Caki2 (cell line): ENCODE measurements at regions of chr12 and their contacts with region 1.

Region 1: DNA sequence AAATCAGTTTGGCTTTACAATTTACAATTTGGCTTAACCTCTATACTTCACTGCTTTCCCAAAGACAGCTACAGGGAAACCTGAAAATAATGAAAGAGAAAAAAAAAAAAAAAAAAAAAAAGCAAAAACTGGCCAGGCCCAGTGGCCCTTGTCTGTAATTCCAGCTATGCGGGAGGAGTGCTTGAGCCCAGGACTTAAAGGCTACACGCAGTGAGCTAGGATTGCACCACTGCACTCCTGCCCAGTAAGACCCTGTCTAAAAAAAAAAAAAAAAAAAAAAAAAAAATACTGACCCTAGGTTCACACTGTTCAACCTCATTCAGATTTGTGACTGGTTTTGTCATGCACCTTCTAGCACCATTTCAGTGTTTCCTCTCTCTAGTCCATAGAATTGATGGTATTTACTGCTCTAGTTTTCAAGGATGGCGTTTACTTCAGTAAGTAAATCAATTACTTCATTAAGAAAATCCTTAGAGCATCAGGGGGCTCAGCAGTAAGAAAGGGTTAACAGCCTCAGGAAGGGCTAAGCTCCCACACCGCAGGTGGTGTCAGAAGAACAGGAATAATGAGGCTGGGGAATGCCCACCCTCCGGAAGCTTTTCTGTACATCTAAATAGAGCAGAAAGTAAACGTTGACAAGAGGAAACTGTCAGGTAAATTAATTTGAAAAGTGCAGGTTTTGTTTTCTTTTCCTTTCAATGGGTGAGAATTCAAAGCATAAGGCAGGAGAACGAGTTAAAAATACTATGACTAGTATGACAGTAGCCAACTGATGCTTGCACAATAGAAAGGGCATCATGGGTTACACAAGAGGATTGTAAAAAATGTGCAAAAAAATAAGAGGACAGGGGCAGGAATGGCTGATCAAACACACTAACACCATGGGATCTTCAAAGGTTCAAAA is 115.0 kb upstream of the MDM1 start:
- DNase-seq: no peak

Region 2: DNA sequence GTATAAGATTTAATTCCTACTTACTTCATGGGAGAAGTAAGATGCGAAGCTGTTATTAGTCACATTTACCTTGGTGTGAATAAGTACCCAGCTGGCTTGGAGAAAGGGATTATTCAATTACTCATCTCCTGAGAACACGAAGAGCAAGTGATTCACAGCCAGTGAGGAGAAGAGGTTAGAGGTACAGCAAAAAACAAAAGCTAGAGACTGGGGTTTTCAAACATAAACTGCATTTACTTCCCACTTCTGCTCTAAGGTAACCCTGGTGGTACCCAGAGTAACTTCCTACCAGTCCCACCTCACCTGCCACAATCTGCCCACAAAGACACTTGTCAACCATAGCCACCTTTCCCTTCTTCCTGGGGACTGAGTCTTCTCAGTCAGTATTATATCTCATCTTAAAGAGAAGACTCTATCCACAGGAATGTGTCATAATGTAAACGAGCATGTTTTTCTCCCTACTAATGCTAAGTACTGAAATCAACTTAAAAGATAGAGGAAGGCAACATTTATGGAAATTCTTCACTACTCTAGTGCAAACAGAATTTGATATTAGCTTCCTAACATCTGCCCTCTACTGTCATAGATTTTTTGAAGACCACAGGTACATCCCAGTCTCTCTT is 187.7 kb before region 1 on chr12:
- in situ Hi-C with region 1: no loop called
- DNase-seq: peak; percentile 35

Region 3: GRCh38 chr12:68374307-68374982 is 72.7 kb before region 1 on chr12:
- in situ Hi-C with region 1: no loop called
- DNase-seq: no peak

Region 4: GRCh38 chr12:68393417-68393816 is 53.7 kb before region 1 on chr12:
- in situ Hi-C with region 1: loop called (anchors 5 kb)
- DNase-seq: no peak

Region 5: GRCh38 chr12:68505970-68506369 is 58.8 kb after region 1 on chr12:
- in situ Hi-C with region 1: no loop called
- DNase-seq: no peak